ENCODE measurements at regions of chr2 and their contacts with region 1.

Region 1: DNA sequence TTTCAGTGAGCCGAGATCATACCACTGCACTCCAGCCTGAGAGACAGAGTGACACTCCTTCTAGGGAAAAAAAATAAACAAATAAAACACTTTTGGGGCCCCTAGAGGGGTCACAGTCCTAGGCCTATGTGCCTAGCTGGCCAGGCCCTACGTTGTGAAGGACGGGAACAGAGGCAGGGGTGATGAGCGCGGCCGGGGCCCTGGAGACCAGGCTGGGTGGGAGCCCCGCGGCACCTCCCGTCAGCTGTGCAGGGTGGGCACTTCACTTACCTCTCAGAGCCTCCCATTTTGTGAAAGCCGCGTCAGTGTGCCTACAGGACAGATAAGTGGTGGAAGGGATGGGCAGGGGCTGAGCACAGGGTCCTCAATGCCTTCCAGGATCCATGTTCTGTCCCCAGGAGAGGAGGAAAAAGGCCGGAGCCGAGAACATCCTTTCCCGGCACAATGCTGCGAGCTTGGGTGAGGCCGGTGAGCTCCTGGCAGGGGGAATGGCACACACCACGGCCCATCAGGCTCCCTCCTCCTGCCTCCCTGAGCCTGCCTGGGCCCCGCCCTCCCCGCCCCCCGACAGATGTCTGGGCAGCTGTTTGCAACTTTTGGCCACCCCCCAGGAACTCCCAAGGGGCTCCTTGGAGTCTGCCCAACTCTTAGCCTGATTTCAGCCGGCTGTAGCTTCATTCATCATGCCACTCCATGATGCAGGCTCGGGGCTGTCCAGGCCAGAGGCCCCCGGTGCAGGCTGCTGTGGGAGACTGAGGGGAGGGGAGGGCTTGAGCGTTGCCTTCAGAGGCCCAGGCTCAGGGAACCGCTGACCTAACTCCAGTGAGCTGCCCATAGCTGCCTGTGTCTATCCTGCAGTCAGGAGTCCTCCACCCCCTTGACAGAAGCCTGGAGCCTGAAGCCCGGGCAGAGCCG is 196.5 kb downstream of the TFCP2L1 start:
- DNase-seq: no peak
- ATAC-seq: no peak
- H3K4me3 Mint-ChIP-seq: no peak overlapping the region
- H3K27ac Mint-ChIP-seq: no peak overlapping the region
- H3K4me1 Mint-ChIP-seq: no peaks in the 10 kb centered on the region
- H3K27me3 Mint-ChIP-seq: peaks cover 2% of the 10 kb centered on the region

Region 2: GRCh38 chr2:121076885-121077549 is 11.5 kb before region 1 on chr2:
- CTCF ChIA-PET with region 1: interaction called, 14 read pairs
- POLR2A ChIA-PET with region 1: interaction called, 3 read pairs
- DNase-seq: peak; percentile 75
- ATAC-seq: peak; percentile 66
- H3K4me3 Mint-ChIP-seq: no peak overlapping the region
- H3K27ac Mint-ChIP-seq: no peak overlapping the region
- H3K4me1 Mint-ChIP-seq: no peaks in the 10 kb centered on the region
- H3K27me3 Mint-ChIP-seq: peaks cover 24% of the 10 kb centered on the region

Region 3: GRCh38 chr2:121155502-121156056 is 67.1 kb after region 1 on chr2:
- CTCF ChIA-PET with region 1: no interaction called
- POLR2A ChIA-PET with region 1: no interaction called
- DNase-seq: no peak
- ATAC-seq: no peak
- H3K4me3 Mint-ChIP-seq: no peak overlapping the region
- H3K27ac Mint-ChIP-seq: no peak overlapping the region
- H3K4me1 Mint-ChIP-seq: no peaks in the 10 kb centered on the region
- H3K27me3 Mint-ChIP-seq: no peaks in the 10 kb centered on the region